ENCODE measurements at regions of chr18 and their contacts with region 1.

Region 1: GRCh38 chr18:54224379-54225014 is at the start of gene MBD2:
- DNase-seq: peak; percentile 96
- H3K4me3 Mint-ChIP-seq: peak within 1 kb of the TSS; percentile 88
- H3K27ac Mint-ChIP-seq: peak within 1 kb of the TSS; percentile 96
- H3K4me1 Mint-ChIP-seq: peaks cover 44% of the 10 kb centered on the region
- H3K27me3 Mint-ChIP-seq: no peaks in the 10 kb centered on the region
- total RNA-seq, gene MBD2: 131 to 140 TPM

Region 2: DNA sequence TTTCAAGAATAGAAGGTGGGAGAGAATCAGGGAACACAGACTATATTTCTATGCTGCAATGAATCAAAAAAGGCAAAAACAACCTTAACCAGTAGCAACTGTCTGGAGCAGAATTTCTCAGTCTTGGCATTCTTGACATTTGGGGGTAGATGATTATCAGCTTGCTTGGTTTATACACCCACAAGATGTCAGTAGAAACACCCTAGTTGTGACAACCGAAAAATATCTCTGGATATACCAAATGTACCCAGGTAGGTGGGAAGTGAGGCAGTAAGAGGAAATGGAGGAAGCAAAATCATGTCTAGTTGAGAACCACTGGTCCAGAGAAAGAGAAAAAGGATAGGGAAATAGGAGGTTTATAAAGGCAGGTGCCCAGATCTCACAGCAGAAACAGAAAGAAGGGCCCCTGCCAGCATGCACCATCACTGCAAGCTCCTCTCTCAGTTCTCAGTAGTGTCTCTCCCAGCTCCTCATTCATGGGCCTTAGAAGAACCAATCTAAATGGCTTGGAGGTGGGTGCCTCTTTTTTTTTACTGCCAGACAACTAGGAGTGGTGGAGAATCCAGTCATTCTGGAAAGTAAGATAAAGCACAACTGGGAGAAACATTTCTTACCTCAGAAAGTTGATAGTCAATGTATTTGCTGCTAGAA is 50.4 kb before region 1 on chr18:
- CTCF ChIA-PET with region 1: interaction called, 6 read pairs
- POLR2A ChIA-PET with region 1: interaction called, 4 read pairs
- intact Hi-C with region 1: loop called (anchors 2 kb)
- DNase-seq: peak; percentile 26
- H3K4me3 Mint-ChIP-seq: no peak overlapping the region
- H3K27ac Mint-ChIP-seq: peak overlapping the region; percentile 79
- H3K4me1 Mint-ChIP-seq: peaks cover 47% of the 10 kb centered on the region
- H3K27me3 Mint-ChIP-seq: no peaks in the 10 kb centered on the region

Region 3: DNA sequence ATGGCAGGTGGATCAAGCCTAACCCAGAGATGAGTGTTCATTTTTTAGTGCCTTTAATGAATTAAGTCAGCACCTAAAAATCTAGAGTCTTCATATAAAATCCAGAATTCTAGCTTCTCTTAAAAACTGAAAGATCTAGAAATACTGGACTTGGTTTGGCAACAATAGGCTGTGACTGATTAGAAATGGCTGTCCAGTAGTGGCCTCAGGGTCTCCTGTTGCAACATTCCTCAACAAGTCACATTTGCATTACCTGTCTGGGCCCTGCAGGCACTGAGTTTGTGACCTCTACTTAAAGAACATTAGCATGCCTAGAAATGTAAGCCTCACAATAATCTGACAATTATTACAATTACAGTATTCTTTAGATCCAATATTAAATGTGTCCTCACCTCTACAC is 33.1 kb before region 1 on chr18:
- CTCF ChIA-PET with region 1: no interaction called
- POLR2A ChIA-PET with region 1: no interaction called
- intact Hi-C with region 1: no loop called
- DNase-seq: no peak
- H3K4me3 Mint-ChIP-seq: no peak overlapping the region
- H3K27ac Mint-ChIP-seq: no peak overlapping the region
- H3K4me1 Mint-ChIP-seq: peaks cover 2% of the 10 kb centered on the region
- H3K27me3 Mint-ChIP-seq: no peaks in the 10 kb centered on the region

Region 4: GRCh38 chr18:54209471-54210180 is 14.9 kb before region 1 on chr18:
- CTCF ChIA-PET with region 1: interaction called, 13 read pairs
- POLR2A ChIA-PET with region 1: interaction called, 8 read pairs
- intact Hi-C with region 1: loop called (anchors 1 kb)
- DNase-seq: no peak
- H3K4me3 Mint-ChIP-seq: peak overlapping the region; percentile 17
- H3K27ac Mint-ChIP-seq: peak overlapping the region; percentile 83
- H3K4me1 Mint-ChIP-seq: peaks cover 62% of the 10 kb centered on the region
- H3K27me3 Mint-ChIP-seq: no peaks in the 10 kb centered on the region

Region 5: GRCh38 chr18:54261894-54262293 is 37.4 kb after region 1 on chr18:
- CTCF ChIA-PET with region 1: interaction called, 15 read pairs
- POLR2A ChIA-PET with region 1: interaction called, 8 read pairs
- intact Hi-C with region 1: loop called (anchors 1 kb)
- DNase-seq: peak; percentile 83
- H3K4me3 Mint-ChIP-seq: no peak overlapping the region
- H3K27ac Mint-ChIP-seq: peak overlapping the region; percentile 79
- H3K4me1 Mint-ChIP-seq: peaks cover 52% of the 10 kb centered on the region
- H3K27me3 Mint-ChIP-seq: no peaks in the 10 kb centered on the region

Region 6: DNA sequence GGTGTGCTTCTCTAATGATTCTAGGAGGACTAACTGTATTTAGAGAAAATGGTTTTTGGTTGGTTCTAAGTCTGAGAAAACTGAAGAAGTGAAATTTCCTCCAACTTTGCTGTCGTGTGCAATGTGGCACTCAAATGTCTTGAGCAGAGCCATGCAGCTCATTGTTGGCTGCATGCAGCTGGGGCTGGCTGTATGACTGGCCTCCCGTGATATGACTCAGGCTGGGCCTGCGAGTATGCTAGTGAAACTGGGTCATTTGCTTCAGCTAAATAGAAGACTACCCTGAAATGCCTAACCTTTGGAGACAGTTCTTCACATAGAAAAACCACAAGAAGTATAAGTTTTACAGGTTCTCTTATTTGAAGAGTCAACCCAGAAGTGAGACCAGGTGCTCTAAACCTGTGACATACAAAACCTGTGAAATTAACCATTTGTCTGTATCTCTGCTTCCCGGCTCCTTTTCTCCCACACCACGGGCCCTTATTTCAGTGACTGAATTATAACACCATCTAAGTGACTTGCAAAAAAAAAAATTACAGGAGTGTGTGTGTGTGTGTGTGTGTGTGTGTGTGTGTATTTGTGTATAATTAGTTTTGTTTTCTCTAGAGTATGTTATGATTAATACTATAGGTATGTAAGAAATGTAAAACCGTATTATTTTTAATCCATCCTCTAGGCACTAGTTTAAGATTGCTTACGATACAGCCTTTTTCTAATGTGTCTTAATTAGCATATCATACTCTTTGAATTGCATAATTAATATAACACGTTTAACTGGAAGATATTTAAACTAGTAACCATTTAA is 60.7 kb after region 1 on chr18:
- CTCF ChIA-PET with region 1: interaction called, 16 read pairs
- POLR2A ChIA-PET with region 1: interaction called, 12 read pairs
- intact Hi-C with region 1: loop called (anchors 1 kb)
- DNase-seq: peak; percentile 92
- H3K4me3 Mint-ChIP-seq: no peak overlapping the region
- H3K27ac Mint-ChIP-seq: peak overlapping the region; percentile 65
- H3K4me1 Mint-ChIP-seq: peaks cover 23% of the 10 kb centered on the region
- H3K27me3 Mint-ChIP-seq: no peaks in the 10 kb centered on the region

Region 7: GRCh38 chr18:54357660-54358494 is 133.4 kb after region 1 on chr18 and contains the starts of genes C18orf54 and STARD6:
- CTCF ChIA-PET with region 1: interaction called, 20 read pairs
- POLR2A ChIA-PET with region 1: interaction called, 12 read pairs
- intact Hi-C with region 1: loop called (anchors 1 kb)
- DNase-seq: peak; percentile 93
- H3K4me3 Mint-ChIP-seq: peak within 1 kb of the TSS; percentile 95
- H3K27ac Mint-ChIP-seq: peak within 1 kb of the TSS; percentile 81
- H3K4me1 Mint-ChIP-seq: peaks cover 14% of the 10 kb centered on the region
- H3K27me3 Mint-ChIP-seq: peaks cover 3% of the 10 kb centered on the region
- total RNA-seq, gene C18orf54: 11.7 to 12.2 TPM
- total RNA-seq, gene STARD6: not detected

Region 8: GRCh38 chr18:54946149-54946581 is 721.7 kb after region 1 on chr18:
- CTCF ChIA-PET with region 1: no interaction called
- POLR2A ChIA-PET with region 1: no interaction called
- intact Hi-C with region 1: loop called (anchors 10 kb)
- DNase-seq: peak; percentile 17
- H3K4me3 Mint-ChIP-seq: peak overlapping the region; percentile 83
- H3K27ac Mint-ChIP-seq: peak overlapping the region; percentile 71
- H3K4me1 Mint-ChIP-seq: peaks cover 17% of the 10 kb centered on the region
- H3K27me3 Mint-ChIP-seq: no peaks in the 10 kb centered on the region